Sigmoid colon (tissue), 7 donors: ENCODE measurements at regions of chrX and their contacts with region 1.

Region 1: DNA sequence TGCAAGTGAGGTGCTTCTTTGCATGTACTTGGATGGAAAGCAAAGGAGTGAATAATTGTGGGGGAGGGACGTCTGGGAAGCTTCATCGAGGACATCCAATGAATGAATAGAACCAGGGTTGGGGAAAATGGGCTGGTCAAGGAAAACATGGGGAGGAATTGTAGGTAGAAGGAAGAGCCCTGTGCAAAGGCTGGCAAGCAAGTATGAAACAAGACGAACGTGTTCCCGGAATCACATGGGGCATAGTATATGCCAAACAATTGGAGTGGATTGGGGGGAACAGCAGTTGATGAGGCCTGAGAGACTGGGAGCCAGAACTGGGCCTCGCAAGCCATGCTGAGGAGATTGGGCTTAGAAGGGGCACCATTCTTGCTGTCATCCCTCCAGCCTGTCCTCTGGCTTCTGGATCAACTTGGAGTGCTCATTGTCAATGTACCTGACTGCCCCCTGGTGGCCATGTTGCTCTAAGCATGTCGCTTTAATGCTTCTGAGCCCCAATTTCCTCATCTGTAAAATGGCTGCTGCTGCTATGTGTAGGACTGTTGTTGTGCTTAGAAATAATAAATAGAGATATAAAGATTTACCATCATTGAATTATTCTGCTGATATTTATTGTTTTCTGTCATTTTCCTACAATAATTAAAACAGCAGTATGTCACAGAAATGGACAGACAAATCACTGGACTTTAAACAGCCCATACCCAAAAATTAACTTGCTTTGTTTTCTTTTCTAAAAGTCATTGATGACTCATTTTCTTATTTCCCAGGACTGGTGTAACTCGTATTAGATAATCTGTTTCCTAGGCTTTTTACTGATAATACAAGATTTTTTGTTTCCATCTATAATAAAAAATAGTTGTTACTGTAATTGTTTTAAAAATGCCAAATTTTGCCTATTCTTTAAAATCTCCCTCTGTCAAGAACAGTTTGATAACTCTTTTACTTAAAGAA is 66.4 kb downstream of the JADE3 start:
- DNase-seq: peak; percentile 76
- H3K4me3 ChIP-seq: no peak overlapping the region
- H3K27ac ChIP-seq: peak overlapping the region in 3 of 4 donors; percentile 6 to 40 (median 33)
- H3K4me1 ChIP-seq: peaks cover 0 to 4% (median 0%) of the 10 kb centered on the region in 4 donors
- H3K27me3 ChIP-seq: no peaks in the 10 kb centered on the region
- CTCF ChIP-seq: peak; percentile 25 to 41 (median 28)
- EP300 ChIP-seq: no peak
- POLR2A ChIP-seq: no peak

Region 2: GRCh38 chrX:46912098-46912602 is 66.5 kb before region 1 on chrX and contains the start of gene JADE3:
- intact Hi-C with region 1: loop called (anchors 2 kb)
- DNase-seq: peak; percentile 85
- H3K4me3 ChIP-seq: peak within 1 kb of the TSS; percentile 55 to 76 (median 64)
- H3K27ac ChIP-seq: peak within 1 kb of the TSS; percentile 72 to 82 (median 78)
- H3K4me1 ChIP-seq: peaks cover 0 to 4% (median 0%) of the 10 kb centered on the region in 4 donors
- H3K27me3 ChIP-seq: no peaks in the 10 kb centered on the region
- CTCF ChIP-seq: no peak
- EP300 ChIP-seq: no peak
- POLR2A ChIP-seq: no peak
- total RNA-seq, gene JADE3: 5.3 to 7.8 (median 7.0) TPM

Region 3: DNA sequence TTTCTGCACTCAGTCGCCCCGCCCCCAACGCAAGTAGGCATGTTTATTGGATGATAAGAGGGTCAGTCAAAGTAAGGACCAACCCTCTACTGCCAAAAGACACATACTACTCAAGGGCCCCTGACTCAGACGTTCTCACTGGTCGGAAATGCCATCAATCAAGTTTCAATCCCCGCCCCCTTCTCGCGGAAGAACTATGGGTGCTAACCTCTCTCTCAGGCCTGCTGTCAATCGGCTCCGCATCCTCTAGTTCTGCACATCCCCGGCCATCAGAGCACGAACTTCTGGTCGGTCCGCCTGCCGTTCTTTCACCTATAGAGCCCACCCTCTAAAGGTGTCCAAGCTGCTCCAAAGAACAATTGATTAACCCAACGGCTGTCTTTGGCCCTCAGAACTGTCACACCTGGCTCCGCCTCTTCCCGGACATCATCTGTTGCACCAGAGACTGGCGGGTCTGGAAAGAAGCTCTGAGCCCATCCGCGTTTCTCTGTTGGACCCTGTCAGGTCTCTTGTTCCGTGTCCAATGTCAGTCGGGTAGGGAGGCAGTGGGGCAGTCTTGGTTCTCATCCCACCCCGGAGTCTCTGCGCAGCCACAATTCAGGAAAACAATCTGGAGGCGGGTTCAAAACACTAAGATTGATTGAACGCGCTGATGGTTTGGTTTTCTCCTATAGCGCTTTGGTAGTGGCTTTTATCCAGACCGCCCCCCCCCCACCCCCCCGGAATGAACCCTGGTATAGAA is 150.7 kb after region 1 on chrX:
- intact Hi-C with region 1: no loop called
- DNase-seq: peak; percentile 96
- H3K4me3 ChIP-seq: peak overlapping the region; percentile 48 to 54 (median 52)
- H3K27ac ChIP-seq: peak overlapping the region; percentile 77 to 81 (median 80)
- H3K4me1 ChIP-seq: peaks cover 0 to 9% (median 0%) of the 10 kb centered on the region in 4 donors
- H3K27me3 ChIP-seq: no peaks in the 10 kb centered on the region
- CTCF ChIP-seq: no peak
- EP300 ChIP-seq: no peak
- POLR2A ChIP-seq: no peak